Activated CD4-positive, alpha-beta memory T cell treated with anti-CD3 and anti-CD28 coated beads for 36 hours (primary cell): ENCODE measurements at regions of chr20 and their contacts with region 1.

Region 1: GRCh38 chr20:43955062-43955749 is 40.6 kb downstream of the TOX2 start:
- DNase-seq: peak; percentile 73
- H3K4me3 Mint-ChIP-seq: peak overlapping the region; percentile 30
- H3K27ac Mint-ChIP-seq: peak overlapping the region; percentile 72
- H3K4me1 Mint-ChIP-seq: peaks cover 76% of the 10 kb centered on the region
- H3K27me3 Mint-ChIP-seq: peaks cover 37% of the 10 kb centered on the region

Region 2: DNA sequence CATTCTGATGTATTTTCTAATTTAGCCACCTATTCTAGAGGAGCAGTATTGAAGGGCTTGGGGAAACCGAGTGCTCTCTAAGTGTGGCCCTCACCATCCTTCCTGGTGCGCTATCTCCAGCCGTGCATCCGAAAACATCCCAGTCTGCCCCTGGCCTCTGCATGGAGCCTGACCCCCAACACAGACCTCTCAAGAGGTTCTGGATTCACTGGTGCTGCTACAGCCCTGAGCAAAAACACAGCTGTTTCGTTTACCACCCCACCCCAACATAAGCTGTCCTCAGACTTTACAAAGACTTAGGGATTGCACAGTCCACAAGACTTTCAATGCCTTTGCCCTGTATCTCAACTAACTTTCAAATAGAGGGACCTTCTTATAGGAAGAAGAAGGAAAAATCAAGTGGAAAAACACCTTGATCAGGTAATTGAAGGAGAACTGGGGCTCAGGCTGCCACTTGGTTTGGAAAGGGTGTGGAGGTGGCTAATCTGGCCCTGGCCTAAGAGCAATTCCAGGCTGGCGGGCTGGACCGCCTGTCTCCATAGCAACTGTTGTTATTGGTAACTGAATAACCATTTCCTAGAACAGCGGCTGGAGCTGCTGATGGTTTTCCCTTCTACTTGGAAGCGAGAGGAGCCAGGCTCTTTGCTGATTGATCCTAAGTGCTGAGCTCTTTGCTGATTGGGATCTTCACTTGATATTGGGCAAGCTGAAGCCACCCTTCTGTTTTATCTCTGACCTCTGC is 130.7 kb before region 1 on chr20:
- CTCF ChIA-PET with region 1: no interaction called
- POLR2A ChIA-PET with region 1: no interaction called
- intact Hi-C with region 1: loop called (anchors 2 kb)
- DNase-seq: no peak
- H3K4me3 Mint-ChIP-seq: no peak overlapping the region
- H3K27ac Mint-ChIP-seq: no peak overlapping the region
- H3K4me1 Mint-ChIP-seq: peaks cover 10% of the 10 kb centered on the region
- H3K27me3 Mint-ChIP-seq: peaks cover 10% of the 10 kb centered on the region

Region 3: DNA sequence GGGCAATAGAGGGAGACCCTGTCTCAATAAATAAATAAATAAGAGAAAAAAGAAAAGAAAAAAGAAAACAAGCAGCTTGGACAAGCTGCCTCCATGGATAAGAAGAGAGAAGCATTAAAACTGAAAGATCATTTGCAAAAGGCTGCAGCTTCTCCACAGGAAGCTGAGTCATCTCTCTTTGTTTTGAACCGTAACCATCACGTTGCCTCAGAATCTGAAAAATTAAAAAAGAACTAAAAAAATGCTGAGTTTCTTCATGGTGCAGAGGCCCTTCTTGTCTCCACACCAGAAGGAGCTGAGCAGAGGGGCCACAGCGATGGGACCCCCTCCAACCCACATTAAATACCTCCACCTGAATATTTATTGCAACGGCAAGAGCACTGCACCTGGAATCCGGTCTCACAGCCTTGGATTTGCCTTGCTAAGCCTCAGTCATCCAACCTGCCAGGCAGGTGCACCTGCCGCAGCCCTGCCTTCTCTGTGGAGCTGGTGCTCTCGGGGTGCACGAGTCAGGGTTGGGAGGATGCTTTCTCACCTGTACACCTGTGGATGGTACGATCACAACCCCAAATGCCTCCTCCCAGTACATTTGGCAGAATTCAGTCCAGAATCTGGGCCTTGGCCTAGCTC is 12.4 kb before region 1 on chr20:
- CTCF ChIA-PET with region 1: interaction called, 6 read pairs
- POLR2A ChIA-PET with region 1: interaction called, 4 read pairs
- intact Hi-C with region 1: loop called (anchors 1 kb)
- DNase-seq: peak; percentile 33
- H3K4me3 Mint-ChIP-seq: peak overlapping the region; percentile 16
- H3K27ac Mint-ChIP-seq: peak overlapping the region; percentile 76
- H3K4me1 Mint-ChIP-seq: peaks cover 58% of the 10 kb centered on the region
- H3K27me3 Mint-ChIP-seq: peaks cover 18% of the 10 kb centered on the region

Region 4: GRCh38 chr20:43975096-43975768 is 20.0 kb after region 1 on chr20:
- CTCF ChIA-PET with region 1: interaction called, 3 read pairs
- POLR2A ChIA-PET with region 1: no interaction called
- intact Hi-C with region 1: loop called (anchors 2 kb)
- DNase-seq: peak; percentile 46
- H3K4me3 Mint-ChIP-seq: no peak overlapping the region
- H3K27ac Mint-ChIP-seq: peak overlapping the region; percentile 55
- H3K4me1 Mint-ChIP-seq: peaks cover 6% of the 10 kb centered on the region
- H3K27me3 Mint-ChIP-seq: peaks cover 2% of the 10 kb centered on the region

Region 5: GRCh38 chr20:44028868-44029847 is 74.0 kb after region 1 on chr20:
- CTCF ChIA-PET with region 1: no interaction called
- POLR2A ChIA-PET with region 1: no interaction called
- intact Hi-C with region 1: loop called (anchors 5 kb)
- DNase-seq: peak; percentile 71
- H3K4me3 Mint-ChIP-seq: peak overlapping the region; percentile 46
- H3K27ac Mint-ChIP-seq: peak overlapping the region; percentile 3
- H3K4me1 Mint-ChIP-seq: peaks cover 39% of the 10 kb centered on the region
- H3K27me3 Mint-ChIP-seq: peaks cover 20% of the 10 kb centered on the region

Region 6: GRCh38 chr20:44069203-44070011 is 114.2 kb after region 1 on chr20:
- CTCF ChIA-PET with region 1: no interaction called
- POLR2A ChIA-PET with region 1: no interaction called
- intact Hi-C with region 1: loop called (anchors 5 kb)
- DNase-seq: peak; percentile 74
- H3K4me3 Mint-ChIP-seq: peak overlapping the region; percentile 65
- H3K27ac Mint-ChIP-seq: peak overlapping the region; percentile 84
- H3K4me1 Mint-ChIP-seq: peaks cover 50% of the 10 kb centered on the region
- H3K27me3 Mint-ChIP-seq: no peaks in the 10 kb centered on the region